IMR-90 (cell line): ENCODE measurements at regions of chr6 and their contacts with region 1.

Region 1: GRCh38 chr6:10694302-10695085 is at the starts of genes C6orf52 and PAK1IP1:
- DNase-seq: peak; percentile 91
- ATAC-seq: peak; percentile 99
- H3K4me3 ChIP-seq: peak within 1 kb of the TSS; percentile 82
- H3K27ac ChIP-seq: peak within 1 kb of the TSS; percentile 86
- H3K4me1 ChIP-seq: peaks cover 2% of the 10 kb centered on the region; the same call in 1 of the 2 replicates
- H3K27me3 ChIP-seq: no peaks in the 10 kb centered on the region
- CTCF ChIP-seq: no peak
- POLR2A ChIP-seq: peak; percentile 90
- RAD21 ChIP-seq: no peak; the same call in 1 of the 2 replicates
- total RNA-seq, gene C6orf52: not detected in 2 replicates
- total RNA-seq, gene PAK1IP1: 22.9 and 28.6 TPM in 2 replicates

Region 2: DNA sequence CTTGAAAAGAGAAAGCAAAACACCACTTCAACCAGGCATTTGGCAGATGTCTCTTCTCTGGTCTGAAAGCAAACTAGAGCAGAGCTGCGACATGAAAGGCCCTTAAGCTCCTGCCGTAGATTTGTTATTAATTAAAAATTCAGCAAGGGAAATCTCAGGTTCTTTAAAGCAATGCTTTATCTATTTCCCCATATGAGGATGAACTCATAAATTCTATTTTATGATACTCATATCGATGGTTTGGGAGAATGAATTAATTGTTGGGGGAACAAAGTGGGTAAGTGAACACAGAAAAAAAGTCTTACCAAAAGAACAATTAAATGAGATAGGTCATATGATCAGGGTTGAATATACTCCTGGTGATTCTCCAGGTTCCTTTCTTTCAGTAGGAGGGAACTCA is 1794.4 kb before region 1 on chr6:
- CTCF ChIA-PET with region 1: no interaction called
- POLR2A ChIA-PET with region 1: no interaction called
- dilution Hi-C with region 1: no loop called
- in situ Hi-C with region 1: no loop called
- intact Hi-C with region 1: no loop called
- DNase-seq: no peak
- ATAC-seq: no peak
- H3K4me3 ChIP-seq: no peak overlapping the region
- H3K27ac ChIP-seq: no peak overlapping the region
- H3K4me1 ChIP-seq: no peaks in the 10 kb centered on the region
- H3K27me3 ChIP-seq: no peaks in the 10 kb centered on the region
- CTCF ChIP-seq: no peak
- POLR2A ChIP-seq: no peak
- RAD21 ChIP-seq: no peak

Region 3: DNA sequence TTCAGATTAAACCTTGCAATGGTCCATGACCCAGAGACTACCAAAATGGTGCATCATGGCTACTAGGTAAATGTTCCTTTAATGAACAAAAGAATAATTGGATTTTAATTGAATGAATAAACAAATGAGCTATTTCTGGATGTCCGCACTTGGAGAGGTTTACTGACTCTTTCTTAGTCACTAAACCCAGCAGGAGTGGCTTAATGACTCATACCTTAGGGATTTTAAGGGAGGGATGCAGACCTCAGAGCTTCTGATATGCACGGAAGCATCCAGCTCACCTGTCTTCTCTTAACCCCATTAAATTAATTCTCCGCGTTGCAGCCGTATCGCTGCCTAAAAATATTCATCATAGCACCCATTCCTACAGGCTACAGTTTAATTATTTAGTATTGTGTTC is 1289.1 kb before region 1 on chr6:
- CTCF ChIA-PET with region 1: no interaction called
- POLR2A ChIA-PET with region 1: no interaction called
- dilution Hi-C with region 1: no loop called
- in situ Hi-C with region 1: no loop called
- intact Hi-C with region 1: no loop called
- DNase-seq: peak; percentile 91
- ATAC-seq: peak; percentile 75
- H3K4me3 ChIP-seq: no peak overlapping the region
- H3K27ac ChIP-seq: no peak overlapping the region
- H3K4me1 ChIP-seq: peaks cover 7% of the 10 kb centered on the region
- H3K27me3 ChIP-seq: no peaks in the 10 kb centered on the region
- CTCF ChIP-seq: no peak
- POLR2A ChIP-seq: no peak
- RAD21 ChIP-seq: no peak

Region 4: GRCh38 chr6:10510592-10511367 is 183.7 kb before region 1 on chr6:
- CTCF ChIA-PET with region 1: interaction called, 4 read pairs
- POLR2A ChIA-PET with region 1: no interaction called
- dilution Hi-C with region 1: no loop called
- in situ Hi-C with region 1: no loop called
- intact Hi-C with region 1: loop called (anchors 1 kb)
- DNase-seq: peak; percentile 15
- ATAC-seq: peak; percentile 92
- H3K4me3 ChIP-seq: no peak overlapping the region
- H3K27ac ChIP-seq: no peak overlapping the region
- H3K4me1 ChIP-seq: no peaks in the 10 kb centered on the region
- H3K27me3 ChIP-seq: no peaks in the 10 kb centered on the region
- CTCF ChIP-seq: peak; percentile 48
- POLR2A ChIP-seq: no peak
- RAD21 ChIP-seq: peak; percentile 61

Region 5: DNA sequence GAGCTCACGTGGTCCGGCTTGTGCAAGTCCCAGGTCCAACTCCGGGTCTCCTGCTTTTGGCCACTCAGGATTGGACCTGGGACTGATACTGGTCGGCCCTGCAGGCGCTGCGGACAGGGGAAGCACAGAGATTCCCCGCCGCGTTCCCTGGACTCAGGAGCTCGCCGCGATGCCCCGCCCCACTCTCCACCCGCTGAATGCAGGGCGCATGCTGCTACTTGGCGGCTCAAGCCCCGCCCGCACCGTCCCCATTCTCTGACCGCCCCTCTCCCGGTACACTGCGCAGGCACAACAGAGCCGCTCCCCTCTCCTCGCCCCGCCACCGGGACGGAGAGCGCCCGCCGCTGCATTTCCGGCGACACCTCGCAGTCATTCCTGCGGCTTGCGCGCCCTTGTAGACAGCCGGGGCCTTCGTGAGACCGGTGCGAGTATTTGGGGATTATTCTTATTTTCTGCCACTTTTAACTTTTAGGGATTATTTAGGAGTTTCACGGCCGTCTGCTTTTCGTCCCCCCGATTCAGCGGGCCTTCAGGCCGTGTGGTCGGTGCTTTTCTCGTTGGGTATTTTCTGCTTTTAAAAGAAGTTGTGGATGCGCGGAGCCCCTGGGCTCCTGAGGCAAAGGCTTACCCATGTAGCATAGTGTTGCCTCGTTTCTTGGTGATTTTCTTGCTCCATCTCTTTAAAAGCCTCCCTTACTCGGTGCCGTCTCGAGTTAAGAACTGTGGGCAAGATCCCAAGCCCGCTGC is 28.5 kb after region 1 on chr6 and contains the start of gene TMEM14C:
- CTCF ChIA-PET with region 1: no interaction called
- POLR2A ChIA-PET with region 1: no interaction called
- dilution Hi-C with region 1: no loop called
- in situ Hi-C with region 1: no loop called
- intact Hi-C with region 1: loop called (anchors 1 kb)
- DNase-seq: peak; percentile 99
- ATAC-seq: peak; percentile 97
- H3K4me3 ChIP-seq: peak within 1 kb of the TSS; percentile 91
- H3K27ac ChIP-seq: peak within 1 kb of the TSS; percentile 91
- H3K4me1 ChIP-seq: peaks cover 8% of the 10 kb centered on the region
- H3K27me3 ChIP-seq: no peaks in the 10 kb centered on the region
- CTCF ChIP-seq: no peak
- POLR2A ChIP-seq: peak; percentile 89
- RAD21 ChIP-seq: 0 out of 2 replicates have a peak, but pooled peaks have one; percentile 4
- total RNA-seq, gene TMEM14C: 129 and 141 TPM in 2 replicates

Region 6: DNA sequence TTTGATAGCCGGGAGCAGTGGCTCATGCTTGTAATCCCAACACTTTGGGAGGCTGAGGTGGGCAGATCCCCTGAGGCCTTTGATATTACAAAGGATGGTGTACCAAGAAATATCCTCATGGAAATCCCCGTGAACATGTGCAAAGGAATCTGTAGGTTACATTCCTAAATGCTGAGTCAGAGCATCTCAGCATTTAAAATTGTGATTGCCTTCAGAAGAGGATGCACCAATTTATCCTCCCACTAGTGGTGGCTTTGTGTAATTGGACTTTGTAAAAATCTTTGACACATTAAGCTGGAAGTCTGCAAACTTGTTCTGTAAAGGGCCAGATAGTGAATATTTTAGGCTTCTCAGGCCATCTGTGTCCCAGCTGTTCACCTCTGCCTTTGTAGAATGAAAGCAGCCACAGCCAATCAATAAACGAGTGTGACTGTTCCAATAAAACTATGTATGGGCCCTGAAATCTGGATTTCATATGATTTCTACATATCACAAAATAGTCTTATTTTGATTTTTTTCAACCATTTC is 64.9 kb after region 1 on chr6:
- CTCF ChIA-PET with region 1: no interaction called
- POLR2A ChIA-PET with region 1: no interaction called
- dilution Hi-C with region 1: no loop called
- in situ Hi-C with region 1: no loop called
- intact Hi-C with region 1: loop called (anchors 5 kb)
- DNase-seq: peak; percentile 96
- ATAC-seq: peak; percentile 80
- H3K4me3 ChIP-seq: no peak overlapping the region
- H3K27ac ChIP-seq: no peak overlapping the region
- H3K4me1 ChIP-seq: peaks cover 2% of the 10 kb centered on the region
- H3K27me3 ChIP-seq: no peaks in the 10 kb centered on the region
- CTCF ChIP-seq: peak; percentile 60
- POLR2A ChIP-seq: no peak
- RAD21 ChIP-seq: peak; percentile 54

Region 7: DNA sequence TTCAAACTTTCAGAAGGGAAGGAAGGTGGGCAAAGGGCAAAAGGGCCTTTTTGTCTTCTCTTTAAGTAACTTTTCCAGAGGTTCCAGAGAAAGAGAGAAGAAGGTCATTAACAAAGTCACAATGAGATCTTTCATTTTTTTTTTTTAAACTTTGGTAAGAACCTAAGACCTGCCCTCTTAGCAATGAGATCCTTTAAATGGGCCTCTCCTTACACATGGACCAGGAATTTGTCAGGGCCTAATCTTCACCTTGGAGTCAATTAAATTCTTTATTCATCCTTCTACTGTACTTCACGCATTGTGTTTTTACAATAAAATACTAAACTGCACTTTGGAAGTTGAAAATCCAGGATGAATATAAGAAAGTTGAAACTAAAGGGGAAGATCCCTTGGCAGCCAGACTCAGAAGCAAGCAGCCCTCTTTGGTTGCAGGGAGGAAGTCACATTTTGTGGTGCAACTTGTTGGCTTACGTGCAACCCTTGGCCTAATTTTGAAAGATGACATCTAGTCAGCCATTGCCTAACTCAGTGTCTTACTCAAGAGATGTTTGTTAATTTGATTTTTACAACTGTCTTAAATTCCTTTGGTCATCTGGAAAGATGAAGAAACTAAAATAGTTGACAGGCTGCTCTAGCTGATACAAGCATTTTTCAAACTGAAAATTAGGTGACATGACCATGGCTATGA is 831.1 kb after region 1 on chr6:
- CTCF ChIA-PET with region 1: no interaction called
- POLR2A ChIA-PET with region 1: no interaction called
- dilution Hi-C with region 1: no loop called
- in situ Hi-C with region 1: no loop called
- intact Hi-C with region 1: no loop called
- DNase-seq: peak; percentile 13
- ATAC-seq: no peak; the same call in 1 of the 2 replicates
- H3K4me3 ChIP-seq: no peak overlapping the region
- H3K27ac ChIP-seq: no peak overlapping the region
- H3K4me1 ChIP-seq: no peaks in the 10 kb centered on the region
- H3K27me3 ChIP-seq: peaks cover 7% of the 10 kb centered on the region
- CTCF ChIP-seq: no peak
- POLR2A ChIP-seq: no peak
- RAD21 ChIP-seq: no peak